ENCODE measurements at regions of chr12 and their contacts with region 1.

Region 1: GRCh38 chr12:52014567-52015530 is 8.1 kb downstream of the TAMALIN start:
- DNase-seq: no peak
- H3K4me3 ChIP-seq: no peak overlapping the region
- H3K27ac ChIP-seq: no peak overlapping the region
- H3K4me1 ChIP-seq: peaks cover 0 to 12% (median 10%) of the 10 kb centered on the region in 4 experiments
- H3K27me3 ChIP-seq: no peaks in the 10 kb centered on the region

Region 2: GRCh38 chr12:51590347-51591019 is 424.4 kb before region 1 on chr12:
- CTCF ChIA-PET with region 1: no interaction called
- POLR2A ChIA-PET with region 1: no interaction called
- DNase-seq: peak; percentile 82 to 88 (median 87)
- H3K4me3 ChIP-seq: peak overlapping the region; percentile 21 to 78 (median 62)
- H3K27ac ChIP-seq: no peak overlapping the region
- H3K4me1 ChIP-seq: peaks cover 3 to 16% (median 12%) of the 10 kb centered on the region in 4 experiments
- H3K27me3 ChIP-seq: peaks cover 9 to 35% (median 23%) of the 10 kb centered on the region in 5 experiments

Region 3: GRCh38 chr12:51951199-51951842 is 63.5 kb before region 1 on chr12 and contains the start of gene ACVR1B:
- CTCF ChIA-PET with region 1: no interaction called
- POLR2A ChIA-PET with region 1: no interaction called
- DNase-seq: peak; percentile 83 to 93 (median 91)
- H3K4me3 ChIP-seq: peak within 1 kb of the TSS; percentile 61 to 90 (median 83)
- H3K27ac ChIP-seq: peak within 1 kb of the TSS; percentile 20 to 72
- H3K4me1 ChIP-seq: peaks cover 19 to 44% (median 33%) of the 10 kb centered on the region in 4 experiments
- H3K27me3 ChIP-seq: peaks cover 0 to 7% (median 3%) of the 10 kb centered on the region in 5 experiments

Region 4: GRCh38 chr12:52004042-52004648 is 10.7 kb before region 1 on chr12:
- CTCF ChIA-PET with region 1: interaction called, 437 read pairs
- POLR2A ChIA-PET with region 1: interaction called, 120 read pairs
- DNase-seq: no peak
- H3K4me3 ChIP-seq: no peak overlapping the region
- H3K27ac ChIP-seq: no peak overlapping the region
- H3K4me1 ChIP-seq: peaks cover 3 to 38% (median 32%) of the 10 kb centered on the region in 4 experiments
- H3K27me3 ChIP-seq: peaks cover 0 to 12% (median 8%) of the 10 kb centered on the region in 5 experiments

Measured in common myeloid progenitor, CD34-positive (primary cell).